Caco-2 (cell line): ENCODE measurements at regions of chr5 and their contacts with region 1.

Region 1: GRCh38 chr5:76402886-76403765 is at the start of gene IQGAP2:
- DNase-seq: peak; percentile 77 to 90
- H3K4me3 ChIP-seq: peak within 1 kb of the TSS; percentile 86
- H3K4me3 Mint-ChIP-seq: peak within 1 kb of the TSS; percentile 79
- H3K27ac Mint-ChIP-seq: peak within 1 kb of the TSS; percentile 98
- H3K4me1 ChIP-seq: peaks cover 43% of the 10 kb centered on the region
- H3K4me1 Mint-ChIP-seq: peaks cover 19% of the 10 kb centered on the region
- H3K27me3 ChIP-seq: no peaks in the 10 kb centered on the region
- H3K27me3 Mint-ChIP-seq: no peaks in the 10 kb centered on the region
- CTCF ChIP-seq: peak; percentile 86 to 95
- total RNA-seq, gene IQGAP2: 85.6 and 89.4 TPM in 2 replicates

Region 2: DNA sequence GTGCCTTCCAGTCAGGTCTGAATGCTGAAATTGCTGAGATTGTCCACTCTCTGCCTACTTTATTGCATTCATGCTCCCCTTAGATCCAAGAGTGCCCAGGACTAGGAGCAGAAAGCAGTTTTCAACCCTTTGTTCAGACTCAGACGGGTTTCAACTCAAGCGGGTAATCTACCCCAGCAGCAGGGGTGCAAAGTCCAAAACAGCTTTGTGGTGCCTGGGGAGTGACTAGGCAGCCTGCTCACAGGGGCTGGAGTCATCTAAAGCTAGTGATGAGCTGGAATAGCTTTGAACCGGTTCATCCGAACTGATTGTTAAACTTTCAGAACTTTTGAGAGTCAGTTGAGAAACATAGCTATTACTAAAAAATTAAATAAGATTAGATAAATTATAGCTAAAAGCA is 71.0 kb before region 1 on chr5:
- CTCF ChIA-PET with region 1: interaction called, 7 read pairs
- POLR2A ChIA-PET with region 1: no interaction called
- intact Hi-C with region 1: loop called (anchors 1 kb)
- DNase-seq: peak; percentile 71 to 85
- H3K4me3 ChIP-seq: no peak overlapping the region
- H3K4me3 Mint-ChIP-seq: peak overlapping the region; percentile 56
- H3K27ac Mint-ChIP-seq: peak overlapping the region; percentile 69
- H3K4me1 ChIP-seq: peaks cover 76% of the 10 kb centered on the region
- H3K4me1 Mint-ChIP-seq: peaks cover 61% of the 10 kb centered on the region
- H3K27me3 ChIP-seq: no peaks in the 10 kb centered on the region; the same call in 1 of the 2 replicates
- H3K27me3 Mint-ChIP-seq: no peaks in the 10 kb centered on the region
- CTCF ChIP-seq: no peak

Region 3: GRCh38 chr5:76384189-76384588 is 18.9 kb before region 1 on chr5:
- CTCF ChIA-PET with region 1: interaction called, 4 read pairs
- POLR2A ChIA-PET with region 1: no interaction called
- intact Hi-C with region 1: loop called (anchors 2 kb)
- DNase-seq: peak; percentile 20 to 43
- H3K4me3 ChIP-seq: no peak overlapping the region
- H3K4me3 Mint-ChIP-seq: no peak overlapping the region
- H3K27ac Mint-ChIP-seq: no peak overlapping the region
- H3K4me1 ChIP-seq: peaks cover 65% of the 10 kb centered on the region
- H3K4me1 Mint-ChIP-seq: peaks cover 46% of the 10 kb centered on the region
- H3K27me3 ChIP-seq: no peaks in the 10 kb centered on the region
- H3K27me3 Mint-ChIP-seq: no peaks in the 10 kb centered on the region
- CTCF ChIP-seq: no peak

Region 4: DNA sequence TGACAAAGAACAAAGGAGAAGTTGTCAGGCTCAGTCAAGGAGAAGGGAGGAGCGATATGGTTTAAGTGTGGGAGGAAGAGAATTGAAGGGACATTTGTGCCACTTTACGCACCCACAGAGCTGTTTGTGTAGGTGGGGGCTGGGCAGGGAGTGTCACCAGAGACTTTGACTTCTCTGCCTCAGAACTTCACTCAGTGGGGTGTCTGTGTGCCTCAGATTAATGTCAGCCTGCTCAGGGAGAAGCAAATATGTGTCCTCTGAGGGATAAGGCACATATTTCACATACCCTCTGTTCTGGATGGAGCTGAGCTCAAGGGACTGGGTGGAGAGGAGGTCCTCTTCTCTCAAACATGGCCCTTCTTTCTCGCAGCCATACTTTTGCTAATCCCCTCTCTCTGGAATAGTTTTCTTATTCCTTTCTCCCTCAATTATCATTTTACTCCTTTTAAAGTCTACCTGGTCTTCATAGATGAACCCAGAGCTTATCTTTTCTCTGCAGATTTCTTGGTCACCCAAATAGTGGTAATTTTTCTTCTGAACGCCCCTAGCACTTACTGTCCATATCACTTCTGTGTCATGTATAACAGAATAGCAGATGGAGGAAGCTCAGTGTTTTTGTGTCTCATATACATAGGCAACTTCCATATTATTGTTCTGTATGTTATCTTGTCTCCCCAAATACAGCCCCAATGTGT is 77.0 kb after region 1 on chr5:
- CTCF ChIA-PET with region 1: interaction called, 3 read pairs
- POLR2A ChIA-PET with region 1: no interaction called
- intact Hi-C with region 1: loop called (anchors 5 kb)
- DNase-seq: peak in 1 of 2 experiments; percentile 53
- H3K4me3 ChIP-seq: no peak overlapping the region
- H3K4me3 Mint-ChIP-seq: no peak overlapping the region
- H3K27ac Mint-ChIP-seq: peak overlapping the region; percentile 10
- H3K4me1 ChIP-seq: peaks cover 83% of the 10 kb centered on the region
- H3K4me1 Mint-ChIP-seq: peaks cover 45% of the 10 kb centered on the region
- H3K27me3 ChIP-seq: no peaks in the 10 kb centered on the region
- H3K27me3 Mint-ChIP-seq: no peaks in the 10 kb centered on the region
- CTCF ChIP-seq: no peak

Region 5: DNA sequence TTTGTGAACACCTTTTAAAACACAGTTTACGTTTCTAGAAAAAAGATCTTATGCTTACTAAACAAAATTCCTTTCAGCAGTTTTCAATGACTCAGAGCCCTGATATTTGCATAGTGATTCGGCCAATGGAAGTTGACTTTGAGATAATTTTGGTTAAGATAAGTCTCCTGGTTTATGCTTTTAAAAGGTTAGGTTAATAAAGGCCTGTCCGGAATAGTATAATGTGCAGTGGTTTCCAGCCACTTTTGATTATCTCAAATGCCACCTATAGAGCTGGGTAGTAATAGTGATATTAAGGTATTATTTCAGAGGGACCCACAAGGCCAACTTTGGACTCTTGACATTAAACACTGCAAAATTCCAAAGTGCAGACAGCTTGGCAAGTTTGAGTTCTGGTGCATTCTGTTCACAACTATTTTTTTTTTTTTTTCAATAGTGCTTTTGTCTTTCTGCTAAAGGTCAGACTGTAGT is 134.0 kb after region 1 on chr5:
- CTCF ChIA-PET with region 1: interaction called, 6 read pairs
- POLR2A ChIA-PET with region 1: no interaction called
- intact Hi-C with region 1: loop called (anchors 2 kb)
- DNase-seq: peak in 1 of 2 experiments; percentile 37
- H3K4me3 ChIP-seq: no peak overlapping the region
- H3K4me3 Mint-ChIP-seq: no peak overlapping the region
- H3K27ac Mint-ChIP-seq: peak overlapping the region; percentile 18
- H3K4me1 ChIP-seq: peaks cover 74% of the 10 kb centered on the region
- H3K4me1 Mint-ChIP-seq: peaks cover 46% of the 10 kb centered on the region
- H3K27me3 ChIP-seq: no peaks in the 10 kb centered on the region
- H3K27me3 Mint-ChIP-seq: no peaks in the 10 kb centered on the region
- CTCF ChIP-seq: no peak

Region 6: GRCh38 chr5:76582230-76583162 is 179.4 kb after region 1 on chr5:
- CTCF ChIA-PET with region 1: interaction called, 19 read pairs
- POLR2A ChIA-PET with region 1: no interaction called
- intact Hi-C with region 1: loop called (anchors 1 kb)
- DNase-seq: no peak
- H3K4me3 ChIP-seq: no peak overlapping the region
- H3K4me3 Mint-ChIP-seq: no peak overlapping the region
- H3K27ac Mint-ChIP-seq: no peak overlapping the region
- H3K4me1 ChIP-seq: peaks cover 33% of the 10 kb centered on the region
- H3K4me1 Mint-ChIP-seq: peaks cover 21% of the 10 kb centered on the region
- H3K27me3 ChIP-seq: no peaks in the 10 kb centered on the region
- H3K27me3 Mint-ChIP-seq: no peaks in the 10 kb centered on the region
- CTCF ChIP-seq: no peak

Region 7: DNA sequence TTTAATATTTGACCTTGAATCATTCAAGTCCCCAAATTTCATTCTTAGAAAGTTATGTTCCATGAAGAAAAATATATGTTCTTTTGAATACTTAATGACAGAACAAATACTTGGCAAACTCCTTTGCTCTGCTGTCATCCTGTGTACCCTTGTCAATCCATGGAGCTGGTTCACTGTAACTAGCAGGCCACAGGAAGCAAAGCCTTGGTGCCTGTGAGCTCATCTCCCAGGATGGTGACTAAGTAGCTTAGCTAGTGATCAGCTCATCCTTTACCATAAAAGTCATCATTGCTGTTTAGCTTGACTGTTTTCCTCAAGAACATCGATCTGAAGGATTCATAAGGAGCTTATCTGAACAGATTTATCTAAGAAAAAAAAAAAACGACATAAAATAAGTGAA is 1023.5 kb after region 1 on chr5:
- CTCF ChIA-PET with region 1: no interaction called
- POLR2A ChIA-PET with region 1: interaction called, 11 read pairs
- intact Hi-C with region 1: no loop called
- DNase-seq: peak in 1 of 2 experiments; percentile 42
- H3K4me3 ChIP-seq: no peak overlapping the region
- H3K4me3 Mint-ChIP-seq: peak overlapping the region; percentile 33
- H3K27ac Mint-ChIP-seq: peak overlapping the region; percentile 85
- H3K4me1 ChIP-seq: peaks cover 50% of the 10 kb centered on the region
- H3K4me1 Mint-ChIP-seq: peaks cover 24% of the 10 kb centered on the region
- H3K27me3 ChIP-seq: no peaks in the 10 kb centered on the region
- H3K27me3 Mint-ChIP-seq: no peaks in the 10 kb centered on the region
- CTCF ChIP-seq: no peak